Astrocyte of the cerebellum (primary cell): ENCODE measurements at regions of chr17 and their contacts with region 1.

Region 1: DNA sequence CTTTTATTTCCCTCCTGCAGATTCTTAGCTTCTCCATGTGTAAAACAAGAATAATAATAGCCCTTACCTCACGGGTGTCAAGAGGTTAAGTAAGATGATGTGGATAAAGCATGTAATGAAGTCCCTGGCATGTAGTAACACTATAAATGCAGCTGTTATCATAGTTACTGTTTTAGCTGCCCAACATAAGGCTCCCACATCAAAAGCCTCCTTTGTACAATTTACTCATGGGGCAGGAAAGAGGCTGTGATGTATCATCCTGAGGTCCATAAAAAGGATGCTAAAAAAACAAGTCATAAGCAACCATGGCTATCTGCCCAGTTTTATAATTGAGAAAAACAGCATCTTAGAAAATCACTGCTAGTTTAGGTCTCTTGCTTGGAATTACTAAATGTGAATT is 339.7 kb downstream of the CA10 start:
- DNase-seq: no peak
- H3K4me3 ChIP-seq: no peak overlapping the region
- CTCF ChIP-seq: no peak

Region 2: GRCh38 chr17:51850201-51850600 is 31.4 kb after region 1 on chr17:
- in situ Hi-C with region 1: loop called (anchors 5 kb)
- DNase-seq: no peak
- H3K4me3 ChIP-seq: no peak overlapping the region
- CTCF ChIP-seq: no peak